Activated T-helper 2 cell treated with anti-CD3 and anti-CD28 coated beads, Interferon-gamma antibody, Interleukin-2, Interleukin-4, amounts not matched to agents 10 μg/mL and 5 μg/mL and 100 μg/mL, durations not matched to agents 14 hours and 24 hours and 36 hours (primary cell): ENCODE measurements at regions of chr18 and their contacts with region 1.

Region 1: DNA sequence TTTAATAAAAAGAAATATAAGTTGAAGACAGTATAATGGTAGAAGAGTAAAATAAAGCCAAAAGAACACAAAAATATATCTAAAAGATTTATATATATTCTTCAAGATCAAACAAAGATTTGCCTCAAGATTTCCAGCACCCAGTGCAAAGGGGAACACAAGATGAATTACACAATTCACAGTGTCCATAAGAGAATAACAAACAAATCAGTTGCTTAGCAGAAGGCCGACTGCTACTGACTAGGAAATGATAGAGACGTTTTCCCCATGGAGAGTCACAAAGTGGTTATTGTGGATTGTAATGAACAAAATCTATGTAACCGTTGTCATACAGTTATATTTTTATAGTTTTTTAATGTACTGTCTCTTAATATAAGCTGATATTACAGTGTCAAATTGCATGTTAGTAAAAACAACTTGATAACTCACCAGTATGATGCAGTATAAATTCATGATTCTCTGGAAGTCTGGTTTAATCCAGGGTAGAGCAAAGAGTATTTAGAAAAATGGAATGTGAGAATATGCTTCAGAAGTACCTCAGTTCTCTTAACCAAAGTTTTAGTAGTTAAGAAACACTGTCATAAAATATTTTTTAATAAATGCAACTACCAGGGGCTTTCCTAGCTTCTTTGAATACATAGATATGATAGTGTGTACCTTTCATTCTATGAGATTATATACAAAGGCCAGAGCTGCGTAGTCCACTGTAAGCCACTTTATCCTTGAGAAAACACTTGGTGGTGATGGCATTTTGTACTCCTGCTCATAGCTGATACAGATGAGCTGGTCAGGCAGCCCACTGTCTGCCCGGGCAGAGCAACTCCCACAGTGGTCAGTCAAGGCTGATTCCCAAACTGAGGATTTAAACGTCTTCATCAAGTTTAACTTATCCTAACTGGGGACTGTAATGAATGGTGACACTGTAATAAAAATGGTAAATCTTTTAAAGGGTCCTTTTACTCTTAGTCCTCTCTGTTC is 180.5 kb upstream of the DTNA start:
- DNase-seq: no peak
- H3K4me3 Mint-ChIP-seq: no peak overlapping the region
- H3K27ac Mint-ChIP-seq: no peak overlapping the region
- H3K4me1 Mint-ChIP-seq: no peaks in the 10 kb centered on the region
- H3K27me3 Mint-ChIP-seq: no peaks in the 10 kb centered on the region

Region 2: DNA sequence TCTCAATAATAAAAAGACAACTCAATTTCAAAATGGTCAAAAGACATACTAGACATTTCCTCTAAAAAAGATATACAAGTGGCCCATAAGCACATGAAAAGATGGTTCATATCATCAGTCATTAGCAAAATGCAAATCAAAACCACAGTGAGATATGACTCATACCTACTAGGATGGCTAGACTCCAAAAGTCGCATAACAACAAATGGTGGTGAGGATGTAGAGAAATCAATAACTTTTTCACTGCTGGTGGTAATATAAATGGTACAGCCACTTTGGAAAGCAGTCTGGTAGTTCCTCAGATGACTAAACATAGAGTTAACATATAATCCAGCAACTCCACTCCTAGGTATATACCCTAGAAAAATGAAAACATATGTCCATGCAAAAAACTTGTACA is 62.6 kb before region 1 on chr18:
- intact Hi-C with region 1: loop called (anchors 10 kb)
- DNase-seq: no peak
- H3K4me3 Mint-ChIP-seq: no peak overlapping the region
- H3K27ac Mint-ChIP-seq: no peak overlapping the region
- H3K4me1 Mint-ChIP-seq: no peaks in the 10 kb centered on the region
- H3K27me3 Mint-ChIP-seq: no peaks in the 10 kb centered on the region

Region 3: DNA sequence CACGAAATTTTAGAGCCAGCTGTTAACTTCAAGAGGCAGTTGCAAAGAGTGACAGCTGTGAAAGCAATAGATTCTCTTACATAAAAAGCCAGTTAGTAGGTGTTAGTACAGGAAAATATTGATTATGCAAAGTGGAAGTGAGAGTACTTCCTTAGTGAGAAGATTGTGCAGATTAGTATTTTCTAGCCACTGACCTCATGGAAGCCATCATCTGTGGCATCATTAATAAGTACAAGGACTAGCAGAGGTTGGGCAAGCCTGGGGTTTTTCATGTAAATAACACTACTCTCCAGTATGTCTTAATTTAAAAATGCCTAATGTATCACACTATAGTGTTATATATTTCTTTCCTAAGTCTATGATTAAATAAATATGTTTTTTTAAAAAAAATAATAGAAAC is 14.3 kb after region 1 on chr18:
- intact Hi-C with region 1: no loop called
- DNase-seq: no peak
- H3K4me3 Mint-ChIP-seq: no peak overlapping the region
- H3K27ac Mint-ChIP-seq: no peak overlapping the region
- H3K4me1 Mint-ChIP-seq: no peaks in the 10 kb centered on the region
- H3K27me3 Mint-ChIP-seq: no peaks in the 10 kb centered on the region